CD8-positive, alpha-beta memory T cell (primary cell): ENCODE measurements at regions of chr16 and their contacts with region 1.

Region 1: DNA sequence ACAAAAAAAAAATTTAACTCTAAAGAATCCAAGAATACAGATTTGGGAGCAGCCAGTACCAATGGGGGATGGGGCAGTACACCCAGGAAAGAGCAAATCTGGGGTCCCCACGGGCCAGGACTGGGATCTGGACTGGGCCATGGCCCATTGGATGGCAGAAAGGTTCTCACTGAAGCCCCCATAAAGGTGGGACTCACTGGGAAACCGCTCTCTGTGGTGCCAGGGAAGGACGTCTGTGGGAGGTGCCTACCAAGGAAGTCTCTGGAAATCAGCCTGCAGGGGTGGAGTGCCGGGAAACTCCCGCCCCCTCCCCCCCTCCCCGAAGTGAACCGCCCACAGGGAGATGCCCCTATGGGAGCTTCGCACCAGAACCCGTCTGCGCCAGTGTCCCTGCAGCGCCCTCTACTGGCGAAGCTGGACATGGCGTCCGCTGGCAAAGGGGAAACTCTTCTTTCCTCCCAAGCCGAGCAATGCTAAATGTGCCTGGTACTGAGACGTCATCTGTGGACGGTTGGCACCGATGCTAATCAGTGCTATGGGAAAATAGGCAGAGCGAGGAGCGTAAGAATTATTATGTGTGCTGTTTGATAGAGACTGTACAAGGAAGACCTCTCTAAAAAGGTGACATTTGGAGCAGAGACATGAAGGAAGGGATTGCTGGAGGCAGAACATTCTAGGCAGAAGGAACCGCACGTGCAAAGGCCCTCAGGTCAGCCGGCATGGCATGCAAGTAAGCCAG is 671.1 kb downstream of the WWOX start:
- DNase-seq: peak; percentile 28 to 87 (median 79)
- H3K4me3 ChIP-seq: no peak overlapping the region
- H3K4me3 Mint-ChIP-seq: peak overlapping the region in 6 of 7 donors; percentile 0 to 70 (median 7)
- H3K27ac ChIP-seq: no peak overlapping the region
- H3K27ac Mint-ChIP-seq: peak overlapping the region in 5 of 8 donors; percentile 6 to 80 (median 36)
- H3K4me1 ChIP-seq: peaks cover 9% of the 10 kb centered on the region
- H3K4me1 Mint-ChIP-seq: peaks cover 26 to 48% (median 32%) of the 10 kb centered on the region in 3 donors
- H3K27me3 ChIP-seq: no peaks in the 10 kb centered on the region
- H3K27me3 Mint-ChIP-seq: peaks cover 2 to 7% of the 10 kb centered on the region in 2 donors

Region 2: DNA sequence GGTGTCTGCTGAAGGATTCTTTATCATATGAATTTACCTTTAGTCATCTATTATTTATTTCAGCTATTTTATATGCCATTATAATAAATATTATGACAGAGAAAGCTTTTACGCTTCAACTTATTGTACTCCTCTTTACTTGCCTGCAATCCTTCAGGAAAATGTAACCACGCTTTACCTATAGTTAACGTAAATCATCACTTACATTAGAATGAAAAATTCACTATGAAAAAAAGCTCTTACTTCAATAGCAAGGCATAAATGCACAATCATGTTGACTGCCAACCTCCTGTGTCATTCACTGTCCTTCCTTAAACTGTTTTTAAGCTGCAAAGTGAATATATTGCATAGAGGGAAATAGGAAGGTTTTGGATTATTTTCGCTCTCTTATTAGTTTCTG is 393.2 kb before region 1 on chr16:
- CTCF ChIA-PET with region 1: no interaction called
- POLR2A ChIA-PET with region 1: interaction called, 19 read pairs
- DNase-seq: no peak
- H3K4me3 ChIP-seq: no peak overlapping the region
- H3K4me3 Mint-ChIP-seq: no peak overlapping the region
- H3K27ac ChIP-seq: no peak overlapping the region
- H3K27ac Mint-ChIP-seq: no peak overlapping the region
- H3K4me1 ChIP-seq: no peaks in the 10 kb centered on the region
- H3K4me1 Mint-ChIP-seq: no peaks in the 10 kb centered on the region
- H3K27me3 ChIP-seq: no peaks in the 10 kb centered on the region
- H3K27me3 Mint-ChIP-seq: no peaks in the 10 kb centered on the region

Region 3: GRCh38 chr16:78503602-78504001 is 266.9 kb before region 1 on chr16:
- CTCF ChIA-PET with region 1: interaction called, 15 read pairs
- POLR2A ChIA-PET with region 1: no interaction called
- DNase-seq: peak; percentile 3 to 52 (median 26)
- H3K4me3 ChIP-seq: no peak overlapping the region
- H3K4me3 Mint-ChIP-seq: no peak overlapping the region
- H3K27ac ChIP-seq: no peak overlapping the region
- H3K27ac Mint-ChIP-seq: no peak overlapping the region
- H3K4me1 ChIP-seq: no peaks in the 10 kb centered on the region
- H3K4me1 Mint-ChIP-seq: no peaks in the 10 kb centered on the region
- H3K27me3 ChIP-seq: no peaks in the 10 kb centered on the region
- H3K27me3 Mint-ChIP-seq: no peaks in the 10 kb centered on the region

Region 4: GRCh38 chr16:78705694-78706093 is 64.8 kb before region 1 on chr16:
- CTCF ChIA-PET with region 1: interaction called, 35 read pairs
- POLR2A ChIA-PET with region 1: interaction called, 3 read pairs
- DNase-seq: peak in 2 of 5 donors; percentile 1 to 40
- H3K4me3 ChIP-seq: no peak overlapping the region
- H3K4me3 Mint-ChIP-seq: no peak overlapping the region
- H3K27ac ChIP-seq: no peak overlapping the region
- H3K27ac Mint-ChIP-seq: no peak overlapping the region
- H3K4me1 ChIP-seq: no peaks in the 10 kb centered on the region
- H3K4me1 Mint-ChIP-seq: peaks cover 7 to 14% (median 12%) of the 10 kb centered on the region in 3 donors
- H3K27me3 ChIP-seq: no peaks in the 10 kb centered on the region
- H3K27me3 Mint-ChIP-seq: no peaks in the 10 kb centered on the region

Region 5: DNA sequence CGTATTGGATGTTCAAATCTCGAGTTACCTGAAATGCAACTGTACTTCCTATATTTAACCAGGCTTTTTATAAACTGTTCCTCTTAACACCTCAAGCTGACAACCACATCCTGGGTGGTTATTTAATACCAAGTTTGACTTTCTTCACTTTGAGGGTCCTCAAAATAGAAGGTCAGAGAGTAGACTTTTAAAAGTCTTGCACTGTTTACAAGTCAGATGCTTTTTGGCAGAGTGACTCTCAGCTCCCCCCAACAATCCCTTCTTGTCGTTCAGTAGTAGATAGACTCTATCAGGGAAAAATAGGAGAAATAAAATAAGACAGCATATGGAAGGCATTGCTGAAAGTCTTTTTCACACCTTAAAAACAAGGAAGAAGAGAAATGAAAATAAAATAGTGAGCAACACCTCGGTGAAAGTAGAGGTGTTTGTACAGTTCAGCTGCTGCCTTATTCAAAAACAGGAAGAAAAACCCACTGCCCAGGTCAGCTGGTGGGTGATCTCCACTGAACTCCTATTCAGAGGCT is 20.7 kb before region 1 on chr16:
- CTCF ChIA-PET with region 1: interaction called, 24 read pairs
- POLR2A ChIA-PET with region 1: interaction called, 3 read pairs
- DNase-seq: peak in 2 of 5 donors; percentile 4 to 61
- H3K4me3 ChIP-seq: peak overlapping the region; percentile 51
- H3K4me3 Mint-ChIP-seq: peak overlapping the region; percentile 79 to 87 (median 82)
- H3K27ac ChIP-seq: peak overlapping the region; percentile 25
- H3K27ac Mint-ChIP-seq: peak overlapping the region; percentile 23 to 95 (median 85)
- H3K4me1 ChIP-seq: peaks cover 37% of the 10 kb centered on the region
- H3K4me1 Mint-ChIP-seq: peaks cover 64 to 89% (median 77%) of the 10 kb centered on the region in 3 donors
- H3K27me3 ChIP-seq: no peaks in the 10 kb centered on the region
- H3K27me3 Mint-ChIP-seq: peaks cover 0 to 1% of the 10 kb centered on the region in 2 donors

Region 6: GRCh38 chr16:78866521-78866920 is 96.0 kb after region 1 on chr16:
- CTCF ChIA-PET with region 1: no interaction called
- POLR2A ChIA-PET with region 1: no interaction called
- DNase-seq: no peak
- H3K4me3 ChIP-seq: no peak overlapping the region
- H3K4me3 Mint-ChIP-seq: peak overlapping the region in 1 of 7 donors; percentile 6
- H3K27ac ChIP-seq: no peak overlapping the region
- H3K27ac Mint-ChIP-seq: no peak overlapping the region
- H3K4me1 ChIP-seq: no peaks in the 10 kb centered on the region
- H3K4me1 Mint-ChIP-seq: peaks cover 0 to 4% (median 0%) of the 10 kb centered on the region in 3 donors
- H3K27me3 ChIP-seq: no peaks in the 10 kb centered on the region
- H3K27me3 Mint-ChIP-seq: no peaks in the 10 kb centered on the region

Region 7: DNA sequence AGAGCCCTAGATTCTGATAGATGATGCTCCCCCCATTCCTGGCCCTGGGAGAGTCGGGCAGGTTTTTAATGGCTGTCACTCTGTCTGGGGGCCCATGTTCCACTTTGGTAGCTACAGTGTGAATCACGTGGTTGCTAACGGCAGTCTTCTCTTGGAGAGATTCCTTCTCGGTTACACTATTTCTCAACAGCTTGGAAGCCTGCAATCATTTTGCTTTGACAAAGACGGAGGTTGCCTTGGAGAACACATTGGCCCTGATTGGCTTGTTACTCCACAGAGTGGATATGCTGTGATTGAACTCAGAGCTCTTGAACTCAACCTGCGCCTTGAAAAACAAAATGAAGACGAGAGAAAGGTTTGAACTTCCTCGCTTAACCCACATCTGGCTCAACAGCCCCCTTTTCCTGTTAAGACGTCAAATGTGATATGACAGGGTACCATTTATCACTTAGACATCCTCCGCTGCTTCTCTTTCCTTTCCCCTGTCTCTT is 611.1 kb after region 1 on chr16:
- CTCF ChIA-PET with region 1: no interaction called
- POLR2A ChIA-PET with region 1: interaction called, 10 read pairs
- DNase-seq: peak; percentile 2 to 58 (median 8)
- H3K4me3 ChIP-seq: peak overlapping the region; percentile 39
- H3K4me3 Mint-ChIP-seq: peak overlapping the region; percentile 26 to 82 (median 78)
- H3K27ac ChIP-seq: peak overlapping the region; percentile 58
- H3K27ac Mint-ChIP-seq: peak overlapping the region; percentile 83 to 98 (median 95)
- H3K4me1 ChIP-seq: peaks cover 28% of the 10 kb centered on the region
- H3K4me1 Mint-ChIP-seq: peaks cover 34 to 42% (median 39%) of the 10 kb centered on the region in 3 donors
- H3K27me3 ChIP-seq: no peaks in the 10 kb centered on the region
- H3K27me3 Mint-ChIP-seq: no peaks in the 10 kb centered on the region